ENCODE measurements at regions of chr6 and their contacts with region 1.

Region 1: GRCh38 chr6:118968416-118968815 is 33.5 kb upstream of the MCM9 start:
- DNase-seq: peak; percentile 12
- ATAC-seq: no peak
- H3K4me3 ChIP-seq: no peak overlapping the region
- H3K27ac ChIP-seq: no peak overlapping the region
- H3K4me1 ChIP-seq: no peaks in the 10 kb centered on the region
- H3K27me3 ChIP-seq: no peaks in the 10 kb centered on the region
- CTCF ChIP-seq: peak in 2 of 3 experiments; percentile 41 to 53; a peak in 2 of 6 replicates
- POLR2A ChIP-seq: no peak
- RAD21 ChIP-seq: peak; percentile 70

Region 2: GRCh38 chr6:118893807-118894424 is 74.5 kb before region 1 on chr6 and contains the start of gene ASF1A:
- CTCF ChIA-PET with region 1: no interaction called
- POLR2A ChIA-PET with region 1: no interaction called
- RAD21 ChIA-PET with region 1: no interaction called
- intact Hi-C with region 1: no loop called
- DNase-seq: peak; percentile 96
- ATAC-seq: peak; percentile 87
- H3K4me3 ChIP-seq: peak within 1 kb of the TSS; percentile 56 to 93
- H3K27ac ChIP-seq: peak within 1 kb of the TSS; percentile 85
- H3K4me1 ChIP-seq: peaks cover 12 to 21% of the 10 kb centered on the region in 2 experiments
- H3K27me3 ChIP-seq: no peaks in the 10 kb centered on the region
- CTCF ChIP-seq: peak; percentile 44 to 58 (median 57); a peak in 4 of 6 replicates
- POLR2A ChIP-seq: peak; percentile 92
- RAD21 ChIP-seq: peak; percentile 52
- total RNA-seq, gene ASF1A: 23.3 TPM

Region 3: DNA sequence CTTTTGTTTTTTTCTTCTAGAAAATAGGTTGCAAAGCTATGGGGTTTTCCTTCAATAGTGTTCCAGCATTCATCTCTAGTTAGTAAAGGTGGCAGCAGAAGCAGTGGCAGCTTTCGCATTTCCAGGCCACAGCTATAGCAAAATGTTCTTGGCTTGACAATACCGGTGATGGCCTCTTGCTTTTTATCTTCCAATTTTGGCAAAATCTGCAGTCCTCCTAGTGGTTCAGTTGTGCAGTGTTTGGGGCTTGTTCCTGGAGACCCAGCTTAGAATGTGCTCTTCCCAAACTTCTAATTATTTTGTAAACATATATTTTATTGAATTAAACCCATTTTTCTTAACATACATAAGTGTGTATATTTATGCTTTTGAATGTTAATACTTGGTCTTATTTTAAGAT is 751.7 kb after region 1 on chr6:
- CTCF ChIA-PET with region 1: no interaction called
- POLR2A ChIA-PET with region 1: no interaction called
- RAD21 ChIA-PET with region 1: no interaction called
- intact Hi-C with region 1: loop called (anchors 10 kb)
- DNase-seq: peak; percentile 32
- ATAC-seq: peak; percentile 85
- H3K4me3 ChIP-seq: no peak overlapping the region
- H3K27ac ChIP-seq: no peak overlapping the region
- H3K4me1 ChIP-seq: no peaks in the 10 kb centered on the region
- H3K27me3 ChIP-seq: no peaks in the 10 kb centered on the region
- CTCF ChIP-seq: peak in 2 of 3 experiments; percentile 48 to 57; a peak in 4 of 6 replicates
- POLR2A ChIP-seq: no peak
- RAD21 ChIP-seq: peak; percentile 15